PC-3 (cell line): ENCODE measurements at regions of chr4 and their contacts with region 1.

Region 1: GRCh38 chr4:107666134-107666533 is 53.9 kb downstream of the PAPSS1 start:
- DNase-seq: peak; percentile 23
- ATAC-seq: 0 out of 2 replicates have a peak, but pooled peaks have one; percentile 20
- H3K4me3 ChIP-seq: no peak overlapping the region
- H3K27ac ChIP-seq: no peak overlapping the region
- H3K4me1 ChIP-seq: no peaks in the 10 kb centered on the region
- H3K27me3 ChIP-seq: no peaks in the 10 kb centered on the region
- CTCF ChIP-seq: peak; percentile 45

Region 2: DNA sequence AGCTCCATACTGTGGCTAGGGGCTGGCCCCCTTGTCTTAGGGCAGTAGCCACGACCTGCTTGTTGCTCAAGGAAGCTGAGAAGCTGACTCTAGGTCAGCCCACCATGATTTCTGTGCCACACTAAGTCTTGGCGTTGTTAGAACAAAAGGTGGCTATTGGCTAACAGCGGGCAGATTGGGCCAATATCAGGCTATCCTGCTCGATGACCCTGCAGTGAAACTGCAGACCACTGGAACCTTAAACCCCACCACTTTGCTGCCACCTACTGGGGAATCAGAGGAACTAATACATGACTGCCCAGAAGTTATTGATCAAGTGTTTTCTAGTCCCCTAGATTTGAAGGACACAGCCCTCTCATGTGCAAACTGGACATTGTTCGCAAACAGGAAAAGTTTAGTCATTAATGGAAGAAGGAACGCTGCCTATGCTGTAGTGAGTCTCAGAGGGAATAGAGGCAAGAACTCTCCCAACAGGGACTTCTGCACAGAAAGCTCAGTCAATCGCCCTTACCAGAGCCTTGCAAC is 70.9 kb after region 1 on chr4:
- CTCF ChIA-PET with region 1: no interaction called
- POLR2A ChIA-PET with region 1: no interaction called
- intact Hi-C with region 1: loop called (anchors 5 kb)
- DNase-seq: peak; percentile 54
- ATAC-seq: peak; percentile 71
- H3K4me3 ChIP-seq: no peak overlapping the region
- H3K27ac ChIP-seq: no peak overlapping the region
- H3K4me1 ChIP-seq: no peaks in the 10 kb centered on the region
- H3K27me3 ChIP-seq: no peaks in the 10 kb centered on the region
- CTCF ChIP-seq: peak; percentile 83